CD4-positive, alpha-beta memory T cell (primary cell): ENCODE measurements at regions of chr21 and their contacts with region 1.

Region 1: DNA sequence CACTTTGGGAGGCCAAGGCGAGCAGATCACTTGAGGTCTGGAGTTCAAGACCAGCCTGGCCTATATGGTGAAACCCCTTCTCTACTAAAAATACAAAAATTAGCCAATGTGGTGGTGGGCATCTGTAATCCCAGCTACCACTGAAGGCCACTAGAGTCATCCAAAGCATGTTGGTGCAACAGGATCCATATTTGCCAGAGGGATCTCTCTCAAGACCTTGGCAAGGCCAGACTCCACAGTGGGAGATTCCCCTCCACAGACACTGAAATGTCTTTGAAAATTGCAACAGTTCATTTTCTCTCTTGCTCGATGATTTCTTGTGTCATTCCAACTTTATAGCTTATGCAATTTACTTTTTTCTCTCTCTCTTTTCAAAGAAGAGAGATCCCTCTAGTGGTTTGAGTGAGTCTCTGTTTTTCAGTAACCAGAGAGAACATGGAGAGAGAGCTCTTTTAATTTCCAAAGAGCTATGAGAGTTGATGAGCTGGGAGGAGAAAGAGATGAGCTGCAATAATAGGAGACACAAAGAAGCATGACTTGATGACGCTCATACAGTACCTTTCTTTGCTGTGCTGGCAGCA is 176.8 kb upstream of the USP25 start:
- DNase-seq: peak in 4 of 5 donors; percentile 21 to 38 (median 34)
- H3K4me3 ChIP-seq: no peak overlapping the region
- H3K4me3 Mint-ChIP-seq: peak overlapping the region in 1 of 8 donors; percentile 21
- H3K27ac ChIP-seq: no peak overlapping the region
- H3K27ac Mint-ChIP-seq: no peak overlapping the region
- H3K4me1 ChIP-seq: peaks cover 11% of the 10 kb centered on the region
- H3K4me1 Mint-ChIP-seq: peaks cover 9 to 10% (median 10%) of the 10 kb centered on the region in 4 donors
- H3K27me3 ChIP-seq: no peaks in the 10 kb centered on the region
- H3K27me3 Mint-ChIP-seq: peaks cover 0 to 4% of the 10 kb centered on the region in 2 donors

Region 2: DNA sequence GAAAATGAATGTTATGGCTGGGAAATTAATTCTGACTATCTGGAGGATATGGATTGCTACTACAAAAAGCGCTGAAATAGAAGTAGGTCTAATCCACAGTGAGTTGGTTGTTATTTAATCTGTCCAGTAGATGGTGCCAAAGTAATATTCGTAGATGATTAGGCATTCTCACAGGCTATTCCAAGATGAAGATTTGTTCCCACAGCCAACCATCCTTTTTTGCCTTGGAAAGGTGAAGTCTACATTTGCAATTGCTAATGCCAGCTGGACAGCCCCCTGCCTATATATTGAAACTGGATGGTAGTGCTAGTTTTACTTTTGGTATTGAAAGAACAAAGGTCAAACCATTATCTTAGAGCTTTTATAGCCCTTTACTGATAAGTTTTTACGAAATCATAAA is 1293.3 kb before region 1 on chr21:
- CTCF ChIA-PET with region 1: no interaction called
- POLR2A ChIA-PET with region 1: no interaction called
- intact Hi-C with region 1: loop called (anchors 2 kb)
- DNase-seq: peak in 3 of 5 donors; percentile 6 to 24 (median 11)
- H3K4me3 ChIP-seq: no peak overlapping the region
- H3K4me3 Mint-ChIP-seq: no peak overlapping the region
- H3K27ac ChIP-seq: no peak overlapping the region
- H3K27ac Mint-ChIP-seq: no peak overlapping the region
- H3K4me1 ChIP-seq: no peaks in the 10 kb centered on the region
- H3K4me1 Mint-ChIP-seq: no peaks in the 10 kb centered on the region
- H3K27me3 ChIP-seq: no peaks in the 10 kb centered on the region
- H3K27me3 Mint-ChIP-seq: peaks cover 3 to 10% of the 10 kb centered on the region in 2 donors

Region 3: GRCh38 chr21:14864211-14865021 is 688.6 kb before region 1 on chr21:
- CTCF ChIA-PET with region 1: interaction called, 4 read pairs
- POLR2A ChIA-PET with region 1: no interaction called
- intact Hi-C with region 1: loop called (anchors 1 kb)
- DNase-seq: peak in 2 of 5 donors; percentile 3 to 4
- H3K4me3 ChIP-seq: no peak overlapping the region
- H3K4me3 Mint-ChIP-seq: no peak overlapping the region
- H3K27ac ChIP-seq: no peak overlapping the region
- H3K27ac Mint-ChIP-seq: no peak overlapping the region
- H3K4me1 ChIP-seq: no peaks in the 10 kb centered on the region
- H3K4me1 Mint-ChIP-seq: peaks cover 0 to 1% (median 0%) of the 10 kb centered on the region in 4 donors
- H3K27me3 ChIP-seq: no peaks in the 10 kb centered on the region
- H3K27me3 Mint-ChIP-seq: no peaks in the 10 kb centered on the region

Region 4: GRCh38 chr21:15472108-15473040 is 80.6 kb before region 1 on chr21:
- CTCF ChIA-PET with region 1: no interaction called
- POLR2A ChIA-PET with region 1: no interaction called
- intact Hi-C with region 1: no loop called
- DNase-seq: no peak
- H3K4me3 ChIP-seq: no peak overlapping the region
- H3K4me3 Mint-ChIP-seq: no peak overlapping the region
- H3K27ac ChIP-seq: no peak overlapping the region
- H3K27ac Mint-ChIP-seq: no peak overlapping the region
- H3K4me1 ChIP-seq: no peaks in the 10 kb centered on the region
- H3K4me1 Mint-ChIP-seq: no peaks in the 10 kb centered on the region
- H3K27me3 ChIP-seq: no peaks in the 10 kb centered on the region
- H3K27me3 Mint-ChIP-seq: peaks cover 3 to 9% of the 10 kb centered on the region in 2 donors

Region 5: DNA sequence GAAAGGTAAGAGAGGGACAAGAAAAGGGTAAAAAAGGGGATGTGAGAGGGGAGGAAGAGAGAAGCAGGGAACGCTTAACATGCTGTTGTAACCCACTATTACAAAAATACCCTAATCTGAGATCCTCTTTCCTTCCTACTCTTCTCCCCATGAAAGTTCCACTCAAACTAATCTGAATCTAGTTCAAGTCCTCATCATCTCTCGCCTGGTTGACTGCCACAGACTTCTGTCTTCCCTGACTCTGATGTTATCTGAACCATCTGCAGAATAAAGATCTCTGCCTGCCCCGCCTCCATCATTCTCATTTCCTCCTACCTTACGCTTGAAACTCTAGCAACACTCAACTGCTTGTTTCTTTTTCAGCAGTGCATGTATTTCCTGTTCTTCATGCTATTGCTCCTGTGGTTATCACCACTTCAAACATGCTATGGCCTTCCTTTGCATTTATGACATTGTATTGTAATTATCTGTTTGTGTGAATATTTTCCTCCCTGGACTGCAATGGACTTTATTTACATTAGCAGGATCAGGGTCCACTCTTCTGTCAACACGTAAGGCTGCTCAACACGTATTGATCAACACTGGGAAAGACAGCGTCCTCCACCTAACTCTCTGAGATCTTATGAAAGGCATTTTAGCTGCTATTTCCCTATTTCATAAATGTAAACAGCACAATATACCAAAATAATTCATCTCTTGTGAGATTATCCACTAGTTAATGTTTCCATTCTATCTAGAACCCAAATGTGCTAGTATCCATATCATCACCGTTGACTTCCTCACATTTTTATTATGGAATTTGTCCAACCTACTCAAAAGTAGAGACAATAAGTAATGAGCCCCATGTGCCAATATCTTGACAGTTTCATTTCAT is 38.7 kb before region 1 on chr21:
- CTCF ChIA-PET with region 1: interaction called, 66 read pairs
- POLR2A ChIA-PET with region 1: no interaction called
- intact Hi-C with region 1: loop called (anchors 2 kb)
- DNase-seq: peak; percentile 74 to 84 (median 77)
- H3K4me3 ChIP-seq: peak overlapping the region in 1 of 2 donors; percentile 39
- H3K4me3 Mint-ChIP-seq: peak overlapping the region; percentile 31 to 86 (median 66)
- H3K27ac ChIP-seq: peak overlapping the region; percentile 30
- H3K27ac Mint-ChIP-seq: peak overlapping the region; percentile 19 to 94 (median 87)
- H3K4me1 ChIP-seq: peaks cover 33% of the 10 kb centered on the region
- H3K4me1 Mint-ChIP-seq: peaks cover 17 to 26% (median 23%) of the 10 kb centered on the region in 4 donors
- H3K27me3 ChIP-seq: no peaks in the 10 kb centered on the region
- H3K27me3 Mint-ChIP-seq: no peaks in the 10 kb centered on the region

Region 6: GRCh38 chr21:15520811-15521636 is 32.0 kb before region 1 on chr21:
- CTCF ChIA-PET with region 1: interaction called, 66 read pairs
- POLR2A ChIA-PET with region 1: interaction called, 4 read pairs
- intact Hi-C with region 1: no loop called
- DNase-seq: peak in 4 of 5 donors; percentile 3 to 21 (median 15)
- H3K4me3 ChIP-seq: no peak overlapping the region
- H3K4me3 Mint-ChIP-seq: peak overlapping the region in 2 of 8 donors; percentile 45 to 58
- H3K27ac ChIP-seq: no peak overlapping the region
- H3K27ac Mint-ChIP-seq: peak overlapping the region in 3 of 7 donors; percentile 17 to 56 (median 22)
- H3K4me1 ChIP-seq: peaks cover 18% of the 10 kb centered on the region
- H3K4me1 Mint-ChIP-seq: peaks cover 10 to 22% (median 16%) of the 10 kb centered on the region in 4 donors
- H3K27me3 ChIP-seq: no peaks in the 10 kb centered on the region
- H3K27me3 Mint-ChIP-seq: no peaks in the 10 kb centered on the region

Region 7: GRCh38 chr21:15564907-15565306 is 11.9 kb after region 1 on chr21:
- CTCF ChIA-PET with region 1: interaction called, 14 read pairs
- POLR2A ChIA-PET with region 1: no interaction called
- intact Hi-C with region 1: no loop called
- DNase-seq: no peak
- H3K4me3 ChIP-seq: no peak overlapping the region
- H3K4me3 Mint-ChIP-seq: no peak overlapping the region
- H3K27ac ChIP-seq: no peak overlapping the region
- H3K27ac Mint-ChIP-seq: no peak overlapping the region
- H3K4me1 ChIP-seq: no peaks in the 10 kb centered on the region
- H3K4me1 Mint-ChIP-seq: peaks cover 0 to 5% (median 3%) of the 10 kb centered on the region in 4 donors
- H3K27me3 ChIP-seq: no peaks in the 10 kb centered on the region
- H3K27me3 Mint-ChIP-seq: peaks cover 15 to 20% of the 10 kb centered on the region in 2 donors

Region 8: DNA sequence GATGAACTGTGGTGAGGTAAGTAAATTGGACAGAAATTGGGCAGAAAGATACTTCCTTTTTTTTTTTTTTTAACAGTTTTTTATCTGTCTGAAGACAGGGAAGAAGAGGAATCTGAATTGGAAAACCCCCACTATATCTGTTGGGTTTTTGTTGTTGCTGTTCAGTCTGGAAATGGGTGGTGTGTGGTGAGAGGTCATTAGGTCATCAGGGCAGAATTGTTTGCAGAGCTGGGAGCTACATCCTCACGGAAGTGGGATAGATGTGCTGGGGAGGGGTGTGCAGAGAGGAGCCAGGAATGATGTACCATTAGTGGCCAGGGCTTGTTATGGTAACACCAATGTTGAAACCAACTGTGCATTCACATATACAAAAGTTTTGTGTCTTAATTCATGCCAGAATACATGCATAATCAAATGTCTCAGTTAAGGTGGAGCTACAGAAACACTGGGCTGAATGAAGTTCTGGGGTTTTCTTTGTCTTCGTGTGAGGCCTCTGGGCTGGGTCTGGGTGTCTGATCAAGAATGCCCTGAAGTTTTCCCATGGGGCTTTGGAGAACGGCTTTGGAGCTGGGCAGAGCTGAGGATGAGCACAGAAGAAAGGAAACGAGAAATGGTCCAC is 189.2 kb after region 1 on chr21:
- CTCF ChIA-PET with region 1: no interaction called
- POLR2A ChIA-PET with region 1: no interaction called
- intact Hi-C with region 1: no loop called
- DNase-seq: no peak
- H3K4me3 ChIP-seq: no peak overlapping the region
- H3K4me3 Mint-ChIP-seq: peak overlapping the region in 6 of 8 donors; percentile 2 to 57 (median 30)
- H3K27ac ChIP-seq: no peak overlapping the region
- H3K27ac Mint-ChIP-seq: peak overlapping the region in 5 of 7 donors; percentile 19 to 89 (median 33)
- H3K4me1 ChIP-seq: peaks cover 72% of the 10 kb centered on the region
- H3K4me1 Mint-ChIP-seq: peaks cover 65 to 92% (median 77%) of the 10 kb centered on the region in 4 donors
- H3K27me3 ChIP-seq: no peaks in the 10 kb centered on the region
- H3K27me3 Mint-ChIP-seq: no peaks in the 10 kb centered on the region